Left ventricle myocardium superior (tissue), 1 donor: ENCODE measurements at regions of chr2 and their contacts with region 1.

Region 1: GRCh38 chr2:26605195-26605998 is 35.8 kb downstream of the CIB4 start:
- DNase-seq: no peak
- ATAC-seq: peak; percentile 73

Region 2: GRCh38 chr2:26745609-26746327 is 140.4 kb after region 1 on chr2:
- intact Hi-C with region 1: loop called (anchors 2 kb)
- DNase-seq: peak; percentile 88
- ATAC-seq: peak; percentile 91

Region 3: DNA sequence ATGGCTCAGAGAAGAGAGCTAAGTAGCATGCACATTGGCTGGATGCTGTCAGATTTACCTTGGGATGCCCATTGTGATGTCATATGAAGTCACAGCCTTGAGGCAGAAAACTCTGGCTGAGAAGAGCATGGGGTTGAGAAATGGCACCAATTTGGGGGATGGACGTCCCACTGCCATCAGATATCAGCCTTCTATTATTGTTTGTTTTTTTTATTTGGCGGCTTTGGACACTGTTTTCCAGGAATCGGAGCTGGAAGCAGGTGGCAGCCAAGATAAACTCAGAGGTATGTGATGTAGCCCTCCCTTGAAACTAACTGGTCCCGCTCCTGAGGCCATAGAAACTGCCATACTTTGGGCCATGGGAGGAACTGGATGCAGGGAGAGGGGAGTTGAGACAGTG is 931.9 kb after region 1 on chr2:
- intact Hi-C with region 1: no loop called
- DNase-seq: no peak
- ATAC-seq: no peak